Activated CD4-positive, alpha-beta T cell treated with anti-CD3 and anti-CD28 coated beads, Interleukin-2, amount 10 ng/mL, durations not matched to agents 7 days and 5 days (primary cell): ENCODE measurements at regions of chr6 and their contacts with region 1.

Region 1: DNA sequence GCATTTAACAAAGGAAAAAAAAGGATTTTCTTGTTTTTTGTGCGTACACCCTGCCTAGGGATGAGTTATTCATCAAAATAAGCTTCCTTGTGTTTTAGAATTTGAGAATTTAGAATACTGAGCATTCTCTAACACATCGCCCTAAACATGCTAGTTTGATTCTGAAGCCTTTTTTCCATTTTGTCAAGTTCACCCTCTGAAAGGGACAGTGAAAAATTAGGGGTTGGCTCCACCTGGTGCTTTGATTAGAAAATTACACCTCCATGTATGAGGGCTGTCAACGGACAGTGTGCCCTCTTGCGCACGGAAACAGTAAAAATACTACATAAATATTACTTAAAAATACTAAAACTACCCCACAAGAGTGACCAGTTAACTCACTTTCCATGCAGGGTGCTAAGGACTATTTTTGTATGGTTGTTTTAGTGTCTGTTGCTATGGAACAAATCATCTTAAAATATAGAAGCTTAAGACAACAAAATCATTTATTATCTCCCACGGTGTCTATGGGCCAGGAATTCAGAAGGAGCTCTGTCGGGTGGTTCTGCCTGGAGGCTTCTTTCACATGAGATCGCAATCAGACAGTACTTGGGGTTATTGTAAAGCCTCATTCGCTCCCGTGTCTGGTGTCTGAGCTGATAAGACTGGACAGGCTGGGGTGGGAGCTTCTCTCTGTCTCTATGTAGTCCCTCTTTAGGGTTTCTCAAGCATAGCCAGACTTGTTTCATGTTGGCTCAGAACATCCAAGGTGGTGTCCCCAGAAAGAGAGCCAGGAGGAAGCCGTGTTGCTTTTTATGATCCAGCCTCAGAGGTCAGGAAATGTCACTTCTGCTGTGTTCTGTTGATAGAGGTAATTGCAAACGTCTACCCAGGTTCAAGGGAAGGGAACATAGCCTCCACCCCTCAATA is 41.1 kb upstream of the TMEM170B start:
- DNase-seq: peak; percentile 84
- H3K4me3 Mint-ChIP-seq: no peak overlapping the region
- H3K27ac Mint-ChIP-seq: no peak overlapping the region
- H3K4me1 Mint-ChIP-seq: peaks cover 2% of the 10 kb centered on the region
- H3K27me3 Mint-ChIP-seq: no peaks in the 10 kb centered on the region

Region 2: DNA sequence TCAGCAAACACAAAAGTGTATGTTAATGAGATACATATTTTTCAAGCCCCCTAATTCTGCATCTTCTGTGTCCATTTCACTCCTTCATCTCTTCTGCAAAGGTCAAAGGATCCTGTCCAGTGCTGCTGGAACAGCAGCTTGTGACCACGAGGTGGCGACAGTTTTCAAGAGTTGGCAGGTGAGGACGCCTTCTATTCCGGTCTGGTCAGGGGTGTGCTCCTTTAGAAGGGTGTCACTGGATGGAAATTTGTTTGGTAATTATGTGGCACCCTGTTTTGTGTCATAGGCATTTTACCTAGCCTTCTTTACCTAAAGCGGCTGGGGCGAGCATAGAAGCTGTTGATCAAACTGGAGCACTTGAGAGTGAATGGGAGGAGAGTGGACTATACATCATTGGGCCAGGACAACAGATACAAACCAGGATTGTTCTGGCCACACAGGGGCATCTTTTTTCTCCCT is 352.0 kb before region 1 on chr6:
- CTCF ChIA-PET with region 1: interaction called, 15 read pairs
- POLR2A ChIA-PET with region 1: no interaction called
- DNase-seq: peak; percentile 80
- H3K4me3 Mint-ChIP-seq: no peak overlapping the region
- H3K27ac Mint-ChIP-seq: no peak overlapping the region
- H3K4me1 Mint-ChIP-seq: no peaks in the 10 kb centered on the region
- H3K27me3 Mint-ChIP-seq: no peaks in the 10 kb centered on the region

Region 3: GRCh38 chr6:11439017-11439420 is 57.4 kb before region 1 on chr6:
- CTCF ChIA-PET with region 1: no interaction called
- POLR2A ChIA-PET with region 1: no interaction called
- DNase-seq: no peak
- H3K4me3 Mint-ChIP-seq: no peak overlapping the region
- H3K27ac Mint-ChIP-seq: no peak overlapping the region
- H3K4me1 Mint-ChIP-seq: peaks cover 7% of the 10 kb centered on the region
- H3K27me3 Mint-ChIP-seq: peaks cover 2% of the 10 kb centered on the region